Ovary (tissue), 10 donors: ENCODE measurements at regions of chr1 and their contacts with region 1.

Region 1: GRCh38 chr1:88891318-88891950 is at the start of gene GTF2B:
- DNase-seq: peak; percentile 89 to 94 (median 92)
- H3K4me3 ChIP-seq: peak within 1 kb of the TSS; percentile 70
- H3K27ac ChIP-seq: peak within 1 kb of the TSS; percentile 77 to 81
- H3K4me1 ChIP-seq: peaks cover 4% of the 10 kb centered on the region
- H3K27me3 ChIP-seq: no peaks in the 10 kb centered on the region
- CTCF ChIP-seq: peak in 1 of 3 donors; percentile 33
- EP300 ChIP-seq: no peak
- POLR2A ChIP-seq: peak; percentile 92
- total RNA-seq, gene GTF2B: 23.2 to 38.7 (median 24.8) TPM

Region 2: GRCh38 chr1:88549536-88549935 is 341.9 kb before region 1 on chr1:
- intact Hi-C with region 1: no loop called
- DNase-seq: no peak
- H3K4me3 ChIP-seq: no peak overlapping the region
- H3K27ac ChIP-seq: no peak overlapping the region
- H3K4me1 ChIP-seq: no peaks in the 10 kb centered on the region
- H3K27me3 ChIP-seq: no peaks in the 10 kb centered on the region
- CTCF ChIP-seq: no peak
- EP300 ChIP-seq: no peak
- POLR2A ChIP-seq: no peak

Region 3: DNA sequence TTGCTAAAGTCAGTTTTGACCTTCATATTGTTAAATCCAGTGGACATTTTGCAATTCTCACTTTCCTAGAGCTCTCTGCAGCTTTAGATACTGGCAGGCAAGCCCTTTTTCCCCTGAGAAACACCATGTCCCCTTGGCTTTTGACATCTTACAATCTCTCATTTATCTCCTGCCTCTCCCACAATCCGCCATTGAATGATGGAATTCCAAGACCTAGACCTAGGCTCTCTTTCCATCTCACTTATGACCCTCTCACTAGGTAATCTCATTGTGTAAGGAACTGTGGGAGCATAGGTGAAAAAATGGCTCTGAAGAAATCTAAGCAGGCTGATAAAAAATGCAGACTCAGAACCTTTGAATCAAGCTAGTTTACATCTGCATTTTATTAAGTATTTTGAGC is 99.0 kb after region 1 on chr1:
- intact Hi-C with region 1: loop called in 1 of 4 experiments (anchors 1 kb)
- DNase-seq: no peak
- H3K4me3 ChIP-seq: no peak overlapping the region
- H3K27ac ChIP-seq: no peak overlapping the region
- H3K4me1 ChIP-seq: peaks cover 4% of the 10 kb centered on the region
- H3K27me3 ChIP-seq: no peaks in the 10 kb centered on the region
- CTCF ChIP-seq: no peak
- EP300 ChIP-seq: no peak
- POLR2A ChIP-seq: no peak